ENCODE measurements at regions of chr9 and their contacts with region 1.

Region 1: GRCh38 chr9:116163293-116164055 is 9.9 kb downstream of the PAPPA start:
- DNase-seq: peak; percentile 10
- ATAC-seq: peak; percentile 44; the same call in 1 of the 3 replicates
- H3K4me3 ChIP-seq: no peak overlapping the region
- H3K27ac ChIP-seq: no peak overlapping the region
- H3K4me1 ChIP-seq: no peaks in the 10 kb centered on the region
- H3K27me3 ChIP-seq: peaks cover 0 to 31% of the 10 kb centered on the region in 2 experiments; a peak in 4 of 5 replicates
- CTCF ChIP-seq: peak; percentile 46
- EP300 ChIP-seq: no peak
- POLR2A ChIP-seq: no peak
- RAD21 ChIP-seq: 0 out of 2 replicates have a peak, but pooled peaks have one; percentile 15

Region 2: GRCh38 chr9:115992834-115993233 is 170.6 kb before region 1 on chr9:
- CTCF ChIA-PET with region 1: no interaction called
- POLR2A ChIA-PET with region 1: no interaction called
- in situ Hi-C with region 1: no loop called
- intact Hi-C with region 1: no loop called
- DNase-seq: no peak
- ATAC-seq: no peak
- H3K4me3 ChIP-seq: no peak overlapping the region
- H3K27ac ChIP-seq: no peak overlapping the region
- H3K4me1 ChIP-seq: peaks cover 10% of the 10 kb centered on the region
- H3K27me3 ChIP-seq: no peaks in the 10 kb centered on the region
- CTCF ChIP-seq: no peak
- EP300 ChIP-seq: no peak
- POLR2A ChIP-seq: no peak
- RAD21 ChIP-seq: no peak

Region 3: DNA sequence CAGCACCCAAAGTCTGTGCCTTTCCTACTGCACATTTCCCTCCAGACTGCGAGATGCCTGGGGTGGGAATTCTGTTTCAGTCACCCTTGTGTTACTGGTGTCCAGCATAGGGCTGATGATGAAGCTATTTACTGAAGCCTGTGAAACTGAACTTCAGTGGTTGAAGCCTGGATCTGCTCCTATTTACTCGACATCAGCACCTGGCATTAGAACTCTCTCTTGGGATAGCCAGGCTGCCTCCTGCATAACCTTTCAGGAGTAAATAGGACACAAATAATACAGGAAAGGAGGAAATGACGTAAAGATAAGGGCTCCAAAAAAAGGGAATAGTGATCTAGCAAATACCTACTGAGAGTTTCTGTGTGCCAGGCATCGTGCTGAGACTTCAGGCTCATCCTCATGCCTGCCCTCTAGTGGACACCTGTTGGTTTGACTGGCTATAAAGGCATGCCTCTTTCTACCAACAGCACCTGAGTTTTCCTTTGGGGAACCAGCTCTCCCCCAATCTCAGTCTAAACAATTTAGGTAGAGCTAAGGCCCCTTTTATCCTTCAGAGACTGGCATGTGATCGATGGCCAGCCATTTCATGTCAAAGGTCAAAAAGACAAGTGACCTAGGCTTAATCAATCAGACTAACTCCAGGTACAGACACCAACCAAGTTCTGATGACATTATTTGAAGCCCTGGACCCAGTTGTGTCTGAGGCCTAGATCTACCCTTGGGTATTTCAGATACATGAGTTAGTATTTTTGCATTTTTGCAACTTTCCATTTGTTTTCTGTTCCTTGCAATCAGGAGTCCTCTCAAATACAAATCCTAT is 331.6 kb after region 1 on chr9:
- CTCF ChIA-PET with region 1: no interaction called
- POLR2A ChIA-PET with region 1: no interaction called
- in situ Hi-C with region 1: no loop called
- intact Hi-C with region 1: loop called (anchors 2 kb)
- DNase-seq: peak; percentile 26
- ATAC-seq: peak; percentile 77
- H3K4me3 ChIP-seq: no peak overlapping the region
- H3K27ac ChIP-seq: no peak overlapping the region
- H3K4me1 ChIP-seq: peaks cover 2% of the 10 kb centered on the region
- H3K27me3 ChIP-seq: no peaks in the 10 kb centered on the region
- CTCF ChIP-seq: peak; percentile 77
- EP300 ChIP-seq: no peak
- POLR2A ChIP-seq: no peak
- RAD21 ChIP-seq: peak; percentile 52

Measured in HepG2 (cell line).